ENCODE measurements at regions of chr2 and their contacts with region 1.

Region 1: GRCh38 chr2:222561817-222562645 is 93.9 kb downstream of the FARSB start:
- DNase-seq: peak; percentile 13
- ATAC-seq: peak; percentile 90
- H3K4me3 ChIP-seq: no peak overlapping the region
- H3K27ac ChIP-seq: no peak overlapping the region
- H3K4me1 ChIP-seq: no peaks in the 10 kb centered on the region
- H3K27me3 ChIP-seq: no peaks in the 10 kb centered on the region
- CTCF ChIP-seq: peak; percentile 77 to 80 (median 79)
- EP300 ChIP-seq: no peak
- POLR2A ChIP-seq: no peak
- RAD21 ChIP-seq: peak; percentile 91

Region 2: DNA sequence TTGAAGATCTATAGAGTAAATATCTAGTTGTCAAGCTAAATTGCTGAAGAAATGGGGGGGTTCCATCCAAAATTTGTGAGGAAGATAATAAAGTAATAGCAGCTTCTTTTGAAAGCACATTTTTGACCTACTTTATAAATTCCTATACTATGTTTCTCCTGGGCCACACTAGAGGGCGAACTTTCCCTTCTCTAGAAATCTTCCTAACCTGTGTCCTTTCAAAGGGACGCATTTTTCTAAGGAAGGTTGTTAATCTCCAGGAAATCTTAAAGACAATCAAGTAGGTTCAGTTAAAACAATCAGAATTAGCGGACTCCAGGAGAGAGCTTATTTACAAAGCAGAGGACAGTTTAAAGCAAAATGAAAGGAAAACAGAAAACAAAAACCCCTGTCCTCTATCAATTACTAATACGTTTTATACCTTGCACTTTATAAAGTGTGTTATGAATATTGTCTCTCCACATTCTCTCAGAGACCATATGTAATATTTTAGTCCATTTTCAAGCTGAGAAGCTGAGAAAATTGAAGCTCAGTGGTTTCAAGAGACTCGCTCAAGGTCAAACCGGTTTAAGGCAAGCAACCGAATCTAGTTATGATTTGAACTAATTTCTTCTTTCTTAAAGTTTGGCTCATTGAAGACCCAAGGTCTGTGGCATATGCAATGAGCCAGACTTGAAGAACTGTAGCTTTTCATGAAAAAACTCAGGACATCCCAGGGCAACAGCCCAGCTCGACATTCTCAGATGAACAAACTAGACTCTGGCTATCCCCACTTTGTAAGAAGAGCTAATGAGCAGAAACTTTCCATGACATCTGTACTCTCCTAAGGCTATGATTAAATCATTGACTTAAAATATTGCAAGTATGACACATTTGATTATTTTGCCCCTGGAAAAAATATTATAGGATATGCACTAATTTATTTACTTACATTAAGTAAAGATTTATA is 536.8 kb before region 1 on chr2:
- CTCF ChIA-PET with region 1: interaction called, 14 read pairs
- POLR2A ChIA-PET with region 1: no interaction called
- RAD21 ChIA-PET with region 1: no interaction called
- SMC1A ChIA-PET with region 1: interaction called, 7 read pairs
- in situ Hi-C with region 1: no loop called
- intact Hi-C with region 1: no loop called
- DNase-seq: no peak
- ATAC-seq: peak; percentile 52; the same call in 1 of the 3 replicates
- H3K4me3 ChIP-seq: no peak overlapping the region; the same call in 1 of the 2 replicates
- H3K27ac ChIP-seq: no peak overlapping the region
- H3K4me1 ChIP-seq: no peaks in the 10 kb centered on the region
- H3K27me3 ChIP-seq: no peaks in the 10 kb centered on the region; a peak in 1 of 4 replicates
- CTCF ChIP-seq: peak; percentile 53 to 59 (median 56)
- EP300 ChIP-seq: no peak
- POLR2A ChIP-seq: no peak
- RAD21 ChIP-seq: peak; percentile 49

Region 3: GRCh38 chr2:222057347-222058073 is 504.5 kb before region 1 on chr2:
- CTCF ChIA-PET with region 1: interaction called, 3 read pairs
- POLR2A ChIA-PET with region 1: no interaction called
- RAD21 ChIA-PET with region 1: interaction called, 4 read pairs
- SMC1A ChIA-PET with region 1: no interaction called
- in situ Hi-C with region 1: loop called (anchors 10 kb)
- intact Hi-C with region 1: loop called (anchors 1 kb)
- DNase-seq: no peak
- ATAC-seq: peak; percentile 68
- H3K4me3 ChIP-seq: no peak overlapping the region
- H3K27ac ChIP-seq: no peak overlapping the region
- H3K4me1 ChIP-seq: no peaks in the 10 kb centered on the region
- H3K27me3 ChIP-seq: peaks cover 0 to 4% of the 10 kb centered on the region in 2 experiments; a peak in 2 of 4 replicates
- CTCF ChIP-seq: peak; percentile 45 to 53 (median 47)
- EP300 ChIP-seq: no peak
- POLR2A ChIP-seq: no peak
- RAD21 ChIP-seq: peak; percentile 63

Region 4: DNA sequence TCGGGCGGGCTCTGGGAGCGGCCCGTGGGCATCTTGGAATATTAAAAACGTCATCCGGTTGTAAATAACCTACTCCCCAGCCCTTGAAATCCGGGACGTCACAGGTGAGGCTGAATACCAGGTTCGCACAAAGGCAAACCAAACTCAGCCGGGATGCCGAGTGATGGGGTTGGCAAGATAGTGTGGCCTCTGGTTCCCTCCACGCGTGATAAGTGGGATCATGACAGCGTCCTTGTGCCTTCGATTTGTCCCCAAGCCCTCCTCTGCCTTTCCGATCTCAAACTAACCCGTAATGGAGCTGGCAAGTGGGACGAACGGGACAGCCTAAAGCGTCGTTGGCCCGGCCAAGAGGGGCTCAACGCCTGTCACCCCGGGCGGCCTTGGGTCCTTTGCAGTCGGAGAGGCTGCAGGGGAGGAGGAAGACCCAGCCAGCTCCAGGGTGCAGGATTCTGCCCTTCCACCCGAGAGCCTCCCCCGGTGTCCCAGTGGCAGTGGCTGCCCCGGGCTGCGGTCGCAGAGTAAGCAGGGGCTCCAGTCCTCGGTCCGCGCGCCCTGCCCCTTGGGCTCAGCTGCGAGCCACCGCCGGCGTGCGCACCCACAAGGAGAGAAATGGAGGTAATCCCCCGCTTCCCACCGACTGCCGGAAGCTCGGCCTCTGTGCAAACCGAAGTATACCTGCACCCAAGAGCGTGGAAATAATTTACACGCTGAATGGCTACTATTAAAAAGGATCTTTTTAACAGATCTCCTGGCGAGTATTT is 249.9 kb before region 1 on chr2:
- CTCF ChIA-PET with region 1: interaction called, 164 read pairs
- POLR2A ChIA-PET with region 1: interaction called, 4 read pairs
- RAD21 ChIA-PET with region 1: interaction called, 91 read pairs
- SMC1A ChIA-PET with region 1: interaction called, 116 read pairs
- in situ Hi-C with region 1: loop called (anchors 5 kb)
- intact Hi-C with region 1: no loop called
- DNase-seq: no peak
- ATAC-seq: peak; percentile 30; the same call in 2 of the 3 replicates
- H3K4me3 ChIP-seq: no peak overlapping the region
- H3K27ac ChIP-seq: no peak overlapping the region
- H3K4me1 ChIP-seq: no peaks in the 10 kb centered on the region
- H3K27me3 ChIP-seq: peaks cover 17 to 40% of the 10 kb centered on the region in 2 experiments
- CTCF ChIP-seq: no peak
- EP300 ChIP-seq: no peak
- POLR2A ChIP-seq: no peak
- RAD21 ChIP-seq: no peak

Region 5: DNA sequence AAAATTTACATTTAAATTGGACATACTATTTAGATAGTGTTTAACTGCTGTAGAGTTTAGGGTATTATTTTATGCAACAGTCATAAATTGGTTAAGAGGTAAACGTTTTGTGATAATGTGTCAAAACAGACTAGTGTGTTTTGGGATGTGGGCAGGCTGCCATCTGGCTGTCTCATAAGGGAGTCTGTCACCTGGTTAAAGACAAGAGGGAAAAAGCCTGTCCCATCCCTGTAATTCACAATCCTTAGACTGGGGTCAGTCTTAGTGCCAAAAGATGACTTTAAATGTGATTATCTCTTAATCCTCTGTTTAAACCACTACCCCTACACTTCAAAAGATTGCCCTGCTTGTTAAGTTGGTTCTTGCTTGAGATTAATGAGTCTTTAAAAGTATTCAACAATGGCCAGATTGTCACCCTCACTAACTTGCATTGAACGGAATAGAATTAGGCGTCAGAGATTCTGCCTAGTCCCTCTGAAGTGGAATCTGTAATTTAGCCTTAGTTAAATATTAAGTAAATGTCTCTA is 78.5 kb before region 1 on chr2:
- CTCF ChIA-PET with region 1: interaction called, 14 read pairs
- POLR2A ChIA-PET with region 1: no interaction called
- RAD21 ChIA-PET with region 1: no interaction called
- SMC1A ChIA-PET with region 1: no interaction called
- in situ Hi-C with region 1: no loop called
- intact Hi-C with region 1: no loop called
- DNase-seq: no peak
- ATAC-seq: peak; percentile 50; the same call in 2 of the 3 replicates
- H3K4me3 ChIP-seq: no peak overlapping the region
- H3K27ac ChIP-seq: no peak overlapping the region
- H3K4me1 ChIP-seq: no peaks in the 10 kb centered on the region
- H3K27me3 ChIP-seq: no peaks in the 10 kb centered on the region
- CTCF ChIP-seq: peak in 2 of 3 experiments; percentile 25 to 63; a peak in 3 of 6 replicates
- EP300 ChIP-seq: no peak
- POLR2A ChIP-seq: no peak
- RAD21 ChIP-seq: peak; percentile 38; the same call in 1 of the 2 replicates

Region 6: DNA sequence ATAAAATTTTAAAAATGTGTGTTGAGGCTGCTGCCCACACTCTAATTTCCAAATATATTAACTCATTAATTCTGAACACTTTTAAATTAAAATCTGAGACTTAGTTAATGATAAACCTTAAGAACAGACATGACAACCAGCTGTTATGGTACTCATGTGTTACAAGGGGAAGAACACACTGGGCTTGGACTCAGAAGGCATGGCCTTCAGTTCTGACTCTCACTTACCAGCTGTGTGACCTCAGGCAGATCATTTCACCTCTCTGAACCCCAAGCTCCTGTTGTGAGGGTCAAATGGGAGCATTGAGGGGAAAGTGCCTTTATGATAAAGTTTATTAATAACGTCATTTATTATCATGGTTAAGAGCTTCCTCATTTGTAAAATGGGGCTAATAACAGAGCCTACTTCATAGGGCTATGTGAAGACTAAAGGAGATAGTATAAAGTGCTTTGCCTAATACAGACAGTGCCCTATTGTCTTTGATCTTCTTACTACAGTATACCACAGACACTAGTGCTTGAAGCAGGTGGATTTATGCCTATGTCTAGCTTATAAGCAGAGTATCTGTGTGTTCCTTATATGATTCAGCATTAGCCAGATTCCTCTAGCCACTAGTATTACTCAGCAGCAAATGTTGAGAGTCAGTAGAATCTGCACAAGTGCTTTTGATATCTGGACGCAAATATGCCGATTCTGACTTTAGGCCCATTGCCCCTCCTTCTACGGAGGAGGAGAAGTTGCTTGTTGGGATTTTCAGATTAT is 38.1 kb before region 1 on chr2:
- CTCF ChIA-PET with region 1: no interaction called
- POLR2A ChIA-PET with region 1: no interaction called
- RAD21 ChIA-PET with region 1: no interaction called
- SMC1A ChIA-PET with region 1: no interaction called
- in situ Hi-C with region 1: no loop called
- intact Hi-C with region 1: no loop called
- DNase-seq: no peak
- ATAC-seq: peak; percentile 66
- H3K4me3 ChIP-seq: no peak overlapping the region
- H3K27ac ChIP-seq: no peak overlapping the region; the same call in 1 of the 2 replicates
- H3K4me1 ChIP-seq: peaks cover 8% of the 10 kb centered on the region
- H3K27me3 ChIP-seq: no peaks in the 10 kb centered on the region
- CTCF ChIP-seq: no peak
- EP300 ChIP-seq: no peak
- POLR2A ChIP-seq: no peak
- RAD21 ChIP-seq: no peak

Region 7: GRCh38 chr2:222572751-222573174 is 10.7 kb after region 1 on chr2:
- CTCF ChIA-PET with region 1: interaction called, 27 read pairs
- POLR2A ChIA-PET with region 1: no interaction called
- RAD21 ChIA-PET with region 1: interaction called, 7 read pairs
- SMC1A ChIA-PET with region 1: interaction called, 3 read pairs
- in situ Hi-C with region 1: no loop called
- intact Hi-C with region 1: no loop called
- DNase-seq: no peak
- ATAC-seq: no peak
- H3K4me3 ChIP-seq: no peak overlapping the region
- H3K27ac ChIP-seq: no peak overlapping the region
- H3K4me1 ChIP-seq: no peaks in the 10 kb centered on the region
- H3K27me3 ChIP-seq: no peaks in the 10 kb centered on the region
- CTCF ChIP-seq: no peak
- EP300 ChIP-seq: no peak
- POLR2A ChIP-seq: no peak
- RAD21 ChIP-seq: no peak

Measured in GM12878 (cell line).